Activated T-helper 1 cell treated with anti-CD3 and anti-CD28 coated beads, Interleukin-12 subunit alpha, Interleukin-12 subunit beta, Interleukin-2, Interleukin-4 antibody, amounts not matched to agents 30 ng/mL and 10 ng/mL and 1 ng/mL, durations not matched to agents 14 hours and 24 hours and 36 hours (primary cell): ENCODE measurements at regions of chr5 and their contacts with region 1.

Region 1: GRCh38 chr5:179623003-179623880 is at the start of gene HNRNPH1:
- DNase-seq: peak; percentile 97
- H3K4me3 Mint-ChIP-seq: peak within 1 kb of the TSS; percentile 94
- H3K27ac Mint-ChIP-seq: peak within 1 kb of the TSS; percentile 98
- H3K4me1 Mint-ChIP-seq: peaks cover 42% of the 10 kb centered on the region
- H3K27me3 Mint-ChIP-seq: peaks cover 2% of the 10 kb centered on the region
- total RNA-seq, gene HNRNPH1: 987 and 1,028 TPM in 2 replicates

Region 2: DNA sequence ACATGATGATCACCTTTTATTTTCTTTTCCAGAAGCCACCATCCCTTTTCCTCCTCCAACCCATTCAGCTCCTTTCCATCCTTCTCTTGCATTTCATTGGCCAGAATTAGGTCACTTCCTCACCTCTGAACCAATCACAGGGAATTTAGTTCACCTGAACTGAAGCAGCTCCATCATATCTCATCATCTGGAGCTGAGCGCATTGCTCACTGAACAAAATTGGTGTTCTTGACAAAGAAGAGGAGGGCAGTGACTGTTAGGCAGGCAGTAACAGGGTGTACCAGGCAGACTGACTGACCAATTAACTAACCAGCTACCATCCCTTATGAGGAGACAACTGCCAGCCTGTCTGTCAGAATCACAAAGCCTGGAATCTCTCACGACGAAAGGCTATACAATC is 891.0 kb before region 1 on chr5:
- intact Hi-C with region 1: loop called (anchors 1 kb)
- DNase-seq: no peak
- H3K4me3 Mint-ChIP-seq: no peak overlapping the region
- H3K27ac Mint-ChIP-seq: no peak overlapping the region
- H3K4me1 Mint-ChIP-seq: peaks cover 6% of the 10 kb centered on the region
- H3K27me3 Mint-ChIP-seq: peaks cover 1% of the 10 kb centered on the region

Region 3: GRCh38 chr5:178766936-178767912 is 856.0 kb before region 1 on chr5:
- intact Hi-C with region 1: no loop called
- DNase-seq: no peak
- H3K4me3 Mint-ChIP-seq: no peak overlapping the region
- H3K27ac Mint-ChIP-seq: no peak overlapping the region
- H3K4me1 Mint-ChIP-seq: no peaks in the 10 kb centered on the region
- H3K27me3 Mint-ChIP-seq: no peaks in the 10 kb centered on the region

Region 4: GRCh38 chr5:179509239-179509638 is 114.0 kb before region 1 on chr5:
- intact Hi-C with region 1: no loop called
- DNase-seq: no peak
- H3K4me3 Mint-ChIP-seq: no peak overlapping the region
- H3K27ac Mint-ChIP-seq: no peak overlapping the region
- H3K4me1 Mint-ChIP-seq: peaks cover 13% of the 10 kb centered on the region
- H3K27me3 Mint-ChIP-seq: no peaks in the 10 kb centered on the region

Region 5: DNA sequence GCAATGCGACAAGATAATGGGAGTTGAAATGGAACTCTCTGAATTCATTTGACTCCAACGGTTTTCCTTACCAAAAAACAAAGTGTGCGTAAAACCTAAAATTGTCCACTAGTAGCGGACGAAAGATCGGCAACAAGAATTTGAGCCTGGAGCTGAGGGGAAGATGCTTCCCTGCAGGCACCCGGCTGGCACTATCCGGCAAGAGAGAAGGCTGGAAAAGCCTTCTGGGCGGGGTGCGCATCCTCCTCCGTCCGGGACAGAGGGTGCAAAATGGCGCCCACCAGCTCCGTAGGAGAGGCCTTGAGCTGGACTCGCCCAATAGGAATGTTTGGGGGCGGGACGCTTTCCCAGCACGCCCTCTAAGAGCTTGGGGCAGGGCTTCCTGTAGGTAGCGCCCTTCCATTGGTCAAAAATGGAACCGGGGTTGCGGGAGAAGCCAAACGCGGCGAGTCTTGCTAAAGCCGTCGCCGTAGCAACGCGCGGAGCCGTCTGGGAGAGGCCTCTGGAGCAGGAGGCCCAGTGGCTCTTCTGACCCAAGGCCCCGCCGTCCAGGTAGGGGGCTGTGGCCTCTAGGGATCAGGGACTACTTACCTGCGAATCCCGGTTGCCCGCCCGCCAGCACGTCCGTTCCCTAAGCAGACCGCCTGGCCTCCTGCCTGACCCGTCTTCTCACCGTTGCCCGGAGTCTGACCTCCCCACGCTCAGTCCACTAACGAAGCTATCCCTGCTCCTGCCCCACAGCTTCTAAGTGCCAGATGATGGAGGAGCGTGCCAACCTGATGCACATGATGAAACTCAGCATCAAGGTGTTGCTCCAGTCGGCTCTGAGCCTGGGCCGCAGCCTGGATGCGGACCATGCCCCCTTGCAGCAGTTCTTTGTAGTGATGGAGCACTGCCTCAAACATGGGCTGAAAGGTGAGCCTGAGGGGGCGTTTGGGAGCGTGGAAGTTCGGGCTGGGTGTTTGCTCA is 63.7 kb before region 1 on chr5:
- intact Hi-C with region 1: loop called (anchors 1 kb)
- DNase-seq: peak; percentile 93
- H3K4me3 Mint-ChIP-seq: peak overlapping the region; percentile 94
- H3K27ac Mint-ChIP-seq: peak overlapping the region; percentile 86
- H3K4me1 Mint-ChIP-seq: peaks cover 10% of the 10 kb centered on the region
- H3K27me3 Mint-ChIP-seq: no peaks in the 10 kb centered on the region

Region 6: DNA sequence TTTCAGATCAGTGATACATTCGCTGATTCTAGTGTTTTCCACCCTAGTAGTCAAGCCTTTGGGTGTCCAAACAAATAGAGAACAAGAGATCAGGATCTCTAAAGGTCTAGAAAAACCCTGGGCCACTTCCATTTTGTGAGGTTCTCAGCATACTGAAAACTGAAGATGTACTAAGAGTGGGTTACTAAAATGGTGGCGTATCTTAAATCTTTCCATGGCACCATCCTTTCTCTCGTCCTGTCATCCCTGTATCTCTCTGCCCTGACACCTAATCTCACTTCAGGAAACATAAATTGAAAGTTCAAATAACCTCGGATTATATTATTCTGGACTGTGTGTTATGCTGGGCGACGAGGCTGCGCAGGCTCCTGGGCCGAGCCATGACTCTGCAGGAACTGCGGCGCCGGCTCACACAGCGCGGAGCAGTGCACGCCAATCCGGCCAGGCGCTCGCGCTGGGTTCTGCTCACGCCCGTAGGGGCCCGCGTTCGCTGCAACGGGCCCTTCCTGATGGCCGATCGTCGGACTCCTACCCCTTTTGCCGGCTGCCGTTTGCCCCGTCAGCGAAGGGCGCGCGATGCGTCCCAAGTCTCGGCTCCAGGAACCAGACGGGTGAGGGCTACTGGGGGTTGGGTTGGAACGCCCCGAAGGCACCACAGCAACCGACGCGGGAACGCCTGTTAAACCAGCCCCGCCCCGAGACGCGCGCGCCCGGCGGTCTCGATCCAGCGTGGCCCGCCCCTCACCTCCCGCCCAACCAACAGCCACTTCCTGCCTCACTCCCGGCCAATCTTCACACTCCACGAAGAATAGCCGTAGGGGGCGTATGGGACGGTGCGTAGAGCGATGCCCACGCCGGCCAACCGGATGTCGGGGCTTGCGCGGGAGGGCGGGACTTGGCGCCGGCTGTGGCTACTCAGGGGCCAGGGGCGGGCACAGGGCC is 75.0 kb after region 1 on chr5:
- intact Hi-C with region 1: loop called (anchors 1 kb)
- DNase-seq: peak; percentile 99
- H3K4me3 Mint-ChIP-seq: peak overlapping the region; percentile 100
- H3K27ac Mint-ChIP-seq: peak overlapping the region; percentile 100
- H3K4me1 Mint-ChIP-seq: peaks cover 27% of the 10 kb centered on the region
- H3K27me3 Mint-ChIP-seq: no peaks in the 10 kb centered on the region

Region 7: GRCh38 chr5:179806250-179807222 is 183.3 kb after region 1 on chr5 and contains the start of gene MGAT4B:
- intact Hi-C with region 1: loop called (anchors 2 kb)
- DNase-seq: peak; percentile 67
- H3K4me3 Mint-ChIP-seq: peak within 1 kb of the TSS; percentile 86
- H3K27ac Mint-ChIP-seq: peak within 1 kb of the TSS; percentile 81
- H3K4me1 Mint-ChIP-seq: peaks cover 32% of the 10 kb centered on the region
- H3K27me3 Mint-ChIP-seq: no peaks in the 10 kb centered on the region
- total RNA-seq, gene MGAT4B: 124 and 132 TPM in 2 replicates

Region 8: DNA sequence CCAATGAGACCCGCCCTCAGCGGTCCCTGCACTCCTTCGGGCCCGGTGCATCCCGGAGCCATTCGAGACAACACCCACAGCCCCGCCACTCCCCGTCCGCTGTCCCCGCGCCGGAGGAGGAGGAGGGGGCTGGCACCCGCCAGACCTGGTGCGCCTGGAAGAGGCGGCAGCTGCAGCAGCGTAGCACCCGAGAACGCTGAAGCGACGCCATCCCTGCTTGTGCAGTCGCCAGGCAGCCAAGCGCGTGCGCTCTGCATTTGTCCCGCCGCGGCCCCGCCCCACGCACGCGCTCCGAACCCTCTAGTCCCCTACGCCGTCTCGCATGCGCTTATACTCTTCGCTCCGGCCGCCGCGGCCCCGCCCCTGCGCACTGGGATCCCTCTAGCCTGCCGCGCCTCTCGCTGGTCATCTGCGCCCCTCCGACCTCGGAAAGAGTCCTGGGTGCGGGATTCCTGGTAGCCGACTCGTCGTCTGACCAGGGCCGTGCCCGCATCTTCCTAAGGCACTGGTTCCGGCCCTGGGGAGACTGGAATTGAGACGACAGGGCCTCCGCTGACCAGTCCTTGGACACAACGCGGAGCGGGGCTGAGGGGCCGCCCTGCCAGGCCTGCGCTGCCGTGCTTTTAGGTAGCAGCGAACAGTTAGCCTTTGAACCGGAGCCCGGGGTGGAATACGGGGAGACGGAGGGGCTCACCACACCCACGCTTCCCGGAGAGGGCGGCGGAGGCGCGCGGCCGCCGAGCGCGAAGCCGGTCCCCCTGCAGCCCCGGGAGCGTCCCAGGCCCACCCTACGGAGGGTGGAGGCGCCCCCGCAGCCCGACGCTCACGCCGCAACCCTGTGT is 235.6 kb after region 1 on chr5 and contains the start of gene MRNIP:
- intact Hi-C with region 1: loop called (anchors 1 kb)
- DNase-seq: peak; percentile 87
- H3K4me3 Mint-ChIP-seq: peak within 1 kb of the TSS; percentile 96
- H3K27ac Mint-ChIP-seq: peak within 1 kb of the TSS; percentile 92
- H3K4me1 Mint-ChIP-seq: peaks cover 9% of the 10 kb centered on the region
- H3K27me3 Mint-ChIP-seq: no peaks in the 10 kb centered on the region
- total RNA-seq, gene MRNIP: 24.6 and 26.3 TPM in 2 replicates

Region 9: DNA sequence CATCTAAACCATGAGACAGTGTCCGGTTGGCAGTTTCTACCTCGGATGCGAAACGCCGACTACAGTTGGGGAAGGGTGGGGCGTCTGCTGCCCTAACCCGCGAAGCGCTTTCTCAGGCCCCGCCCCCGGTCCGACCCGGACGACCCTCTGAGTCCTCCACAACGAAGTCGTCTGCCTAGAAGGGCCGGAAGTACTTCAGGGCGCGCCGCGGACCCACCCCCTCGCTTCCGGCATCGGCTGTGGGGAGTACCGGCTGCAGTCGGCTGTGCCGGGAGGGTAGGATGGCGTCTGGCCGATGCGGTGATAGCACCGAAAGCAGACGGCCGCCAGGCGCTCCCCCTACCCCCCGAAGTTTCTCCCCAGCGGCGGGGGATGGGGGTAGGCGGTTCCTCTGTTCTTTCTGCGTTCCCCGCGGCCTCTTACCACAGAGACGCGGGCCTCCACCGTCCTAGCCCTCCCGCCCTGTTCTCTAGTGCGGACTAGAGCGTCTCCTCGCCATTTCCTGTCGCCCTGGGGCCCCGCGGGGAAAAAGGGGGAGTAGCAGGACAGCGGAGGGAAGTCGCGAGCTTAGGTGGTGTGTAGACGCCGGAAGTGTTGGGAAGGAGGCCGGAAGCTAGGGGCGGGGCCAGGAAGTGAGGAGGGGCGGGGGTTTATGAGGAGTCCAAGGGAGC is 1600.0 kb after region 1 on chr5 and contains the start of gene TRIM41:
- intact Hi-C with region 1: loop called (anchors 5 kb)
- DNase-seq: peak; percentile 97
- H3K4me3 Mint-ChIP-seq: peak within 1 kb of the TSS; percentile 95
- H3K27ac Mint-ChIP-seq: peak within 1 kb of the TSS; percentile 98
- H3K4me1 Mint-ChIP-seq: peaks cover 64% of the 10 kb centered on the region
- H3K27me3 Mint-ChIP-seq: peaks cover 9% of the 10 kb centered on the region
- total RNA-seq, gene TRIM41: 31.8 and 34.8 TPM in 2 replicates